ENCODE measurements at regions of chr12 and their contacts with region 1.

Region 1: GRCh38 chr12:66217342-66217917 is 28.4 kb downstream of the IRAK3 start:
- DNase-seq: no peak
- ATAC-seq: no peak

Region 2: GRCh38 chr12:66235626-66236281 is 18.3 kb after region 1 on chr12:
- intact Hi-C with region 1: loop called (anchors 1 kb)
- DNase-seq: no peak
- ATAC-seq: no peak

Measured in Right ventricle myocardium inferior (tissue), 1 donor.